CD8-positive, alpha-beta T cell (primary cell): ENCODE measurements at regions of chr9 and their contacts with region 1.

Region 1: GRCh38 chr9:136728080-136728547 is 14.6 kb downstream of the LCN10 start:
- DNase-seq: peak; percentile 86 to 97 (median 92)
- ATAC-seq: peak; percentile 80
- H3K4me3 ChIP-seq: peak overlapping the region; percentile 66 to 96
- H3K4me3 Mint-ChIP-seq: peak overlapping the region; percentile 92
- H3K27ac ChIP-seq: peak overlapping the region in 1 of 2 experiments; percentile 84
- H3K27ac Mint-ChIP-seq: peak overlapping the region; percentile 45
- H3K4me1 ChIP-seq: peaks cover 30% of the 10 kb centered on the region
- H3K4me1 Mint-ChIP-seq: peaks cover 25% of the 10 kb centered on the region
- H3K27me3 ChIP-seq: no peaks in the 10 kb centered on the region
- H3K27me3 Mint-ChIP-seq: no peaks in the 10 kb centered on the region
- CTCF ChIP-seq: peak; percentile 93

Region 2: GRCh38 chr9:136439550-136440408 is 288.3 kb before region 1 on chr9 and contains the start of gene INPP5E:
- CTCF ChIA-PET with region 1: no interaction called
- POLR2A ChIA-PET with region 1: no interaction called
- intact Hi-C with region 1: loop called in 1 of 2 experiments (anchors 5 kb)
- DNase-seq: peak; percentile 72 to 94 (median 82)
- ATAC-seq: peak; percentile 82
- H3K4me3 ChIP-seq: peak within 1 kb of the TSS; percentile 56 to 68
- H3K4me3 Mint-ChIP-seq: peak within 1 kb of the TSS; percentile 83
- H3K27ac ChIP-seq: peak within 1 kb of the TSS; percentile 25 to 42
- H3K27ac Mint-ChIP-seq: peak within 1 kb of the TSS; percentile 37
- H3K4me1 ChIP-seq: peaks cover 27% of the 10 kb centered on the region
- H3K4me1 Mint-ChIP-seq: peaks cover 26% of the 10 kb centered on the region
- H3K27me3 ChIP-seq: no peaks in the 10 kb centered on the region
- H3K27me3 Mint-ChIP-seq: no peaks in the 10 kb centered on the region
- CTCF ChIP-seq: peak; percentile 60
- total RNA-seq, gene INPP5E: 11.4 to 12.7 TPM

Region 3: DNA sequence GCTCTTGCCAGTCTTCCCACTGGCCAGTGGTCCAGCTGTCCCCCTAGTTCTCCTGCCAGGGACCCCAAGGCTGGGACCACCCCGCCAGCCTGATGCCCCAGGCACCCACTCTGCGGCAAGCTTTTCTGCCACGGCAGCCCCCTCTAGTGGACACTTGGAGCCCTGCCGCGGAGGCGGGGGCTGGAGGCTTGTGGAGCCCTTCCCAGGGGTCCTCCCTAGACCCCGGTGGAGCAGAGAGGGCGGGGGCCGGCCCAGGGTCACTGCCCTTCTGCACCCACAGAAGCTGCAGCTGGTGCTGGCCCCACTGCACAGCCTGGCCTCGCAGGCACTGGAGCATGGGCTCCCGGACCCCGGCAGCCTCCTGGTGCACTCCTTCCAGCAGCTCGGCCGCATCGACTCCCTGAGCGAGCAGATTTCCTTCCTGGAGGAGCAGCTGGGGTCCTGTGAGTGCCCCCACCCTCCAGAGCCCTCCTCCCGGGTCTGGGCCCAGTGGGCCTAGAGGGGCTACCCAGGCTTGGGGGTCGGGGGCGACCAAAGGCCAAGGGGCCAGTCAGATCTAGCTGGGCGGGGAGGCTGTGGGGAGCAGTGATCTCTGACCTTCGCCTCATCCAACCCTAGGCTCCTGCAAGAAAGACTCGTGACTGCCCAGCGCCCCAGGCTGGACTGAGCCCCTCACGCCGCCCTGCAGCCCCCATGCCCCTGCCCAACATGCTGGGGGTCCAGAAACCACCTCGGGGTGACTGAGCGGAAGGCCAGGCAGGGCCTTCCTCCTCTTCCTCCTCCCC is 56.3 kb before region 1 on chr9:
- CTCF ChIA-PET with region 1: interaction called, 11 read pairs
- POLR2A ChIA-PET with region 1: interaction called, 9 read pairs
- intact Hi-C with region 1: loop called in 1 of 2 experiments (anchors 5 kb)
- DNase-seq: peak in 7 of 9 experiments; percentile 20 to 58 (median 46)
- ATAC-seq: peak; percentile 72
- H3K4me3 ChIP-seq: no peak overlapping the region
- H3K4me3 Mint-ChIP-seq: no peak overlapping the region
- H3K27ac ChIP-seq: no peak overlapping the region
- H3K27ac Mint-ChIP-seq: no peak overlapping the region
- H3K4me1 ChIP-seq: no peaks in the 10 kb centered on the region
- H3K4me1 Mint-ChIP-seq: no peaks in the 10 kb centered on the region
- H3K27me3 ChIP-seq: no peaks in the 10 kb centered on the region
- H3K27me3 Mint-ChIP-seq: no peaks in the 10 kb centered on the region
- CTCF ChIP-seq: peak; percentile 71

Region 4: GRCh38 chr9:136700959-136701667 is 27.0 kb before region 1 on chr9:
- CTCF ChIA-PET with region 1: interaction called, 4 read pairs
- POLR2A ChIA-PET with region 1: interaction called, 4 read pairs
- intact Hi-C with region 1: loop called in 1 of 2 experiments (anchors 1 kb)
- DNase-seq: peak; percentile 32 to 87 (median 56)
- ATAC-seq: peak; percentile 87
- H3K4me3 ChIP-seq: peak overlapping the region; percentile 37 to 51
- H3K4me3 Mint-ChIP-seq: peak overlapping the region; percentile 79
- H3K27ac ChIP-seq: peak overlapping the region in 1 of 2 experiments; percentile 63
- H3K27ac Mint-ChIP-seq: peak overlapping the region; percentile 97
- H3K4me1 ChIP-seq: peaks cover 16% of the 10 kb centered on the region
- H3K4me1 Mint-ChIP-seq: peaks cover 20% of the 10 kb centered on the region
- H3K27me3 ChIP-seq: peaks cover 0 to 5% of the 10 kb centered on the region in 2 experiments
- H3K27me3 Mint-ChIP-seq: peaks cover 3% of the 10 kb centered on the region
- CTCF ChIP-seq: no peak

Region 5: DNA sequence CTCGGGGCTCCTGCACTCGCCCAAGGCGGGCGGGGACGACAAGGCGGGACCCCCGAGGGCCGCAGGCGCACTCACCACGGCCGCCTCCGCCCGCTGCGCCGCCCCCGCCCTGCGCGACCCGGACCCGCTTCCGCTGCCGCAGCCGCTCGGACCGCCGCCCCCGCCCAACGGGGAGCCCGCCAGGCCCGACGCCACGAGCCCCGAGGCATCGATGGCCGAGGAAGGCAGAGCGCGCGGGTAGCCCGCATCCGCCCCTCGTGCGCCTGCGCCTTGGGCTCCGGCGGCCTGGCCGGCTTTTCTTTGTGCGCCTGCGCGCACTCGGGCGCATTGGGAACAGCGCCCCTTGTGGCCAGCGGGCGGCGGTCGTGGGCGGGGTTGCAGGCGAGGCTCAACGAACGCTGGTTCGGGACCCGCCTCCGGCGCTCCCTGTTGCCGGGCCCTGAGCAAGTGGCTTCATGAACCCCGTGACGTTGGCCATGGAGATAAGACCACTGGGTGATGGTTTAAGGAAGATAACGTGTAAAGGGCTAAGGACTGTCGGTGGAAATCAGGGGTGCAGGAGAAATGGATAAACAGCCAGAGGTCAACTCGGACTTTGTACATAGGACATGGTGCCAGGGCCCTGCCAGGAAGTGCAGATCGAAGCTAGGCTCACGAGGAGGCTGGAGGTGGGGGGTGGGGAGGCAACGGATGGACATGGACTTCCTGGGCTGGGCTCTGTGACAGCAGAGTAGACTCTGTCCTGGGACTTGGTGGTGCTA is 216.6 kb after region 1 on chr9 and contains the starts of genes C8G and FBXW5:
- CTCF ChIA-PET with region 1: no interaction called
- POLR2A ChIA-PET with region 1: no interaction called
- intact Hi-C with region 1: loop called in 1 of 2 experiments (anchors 1 kb)
- DNase-seq: peak; percentile 87 to 98 (median 93)
- ATAC-seq: peak; percentile 87
- H3K4me3 ChIP-seq: peak within 1 kb of the TSS; percentile 63 to 79
- H3K4me3 Mint-ChIP-seq: peak within 1 kb of the TSS; percentile 82
- H3K27ac ChIP-seq: peak within 1 kb of the TSS; percentile 28 to 48
- H3K27ac Mint-ChIP-seq: peak within 1 kb of the TSS; percentile 62
- H3K4me1 ChIP-seq: peaks cover 16% of the 10 kb centered on the region
- H3K4me1 Mint-ChIP-seq: peaks cover 12% of the 10 kb centered on the region
- H3K27me3 ChIP-seq: no peaks in the 10 kb centered on the region
- H3K27me3 Mint-ChIP-seq: no peaks in the 10 kb centered on the region
- CTCF ChIP-seq: peak; percentile 96
- total RNA-seq, gene C8G: not detected
- total RNA-seq, gene FBXW5: 38.4 to 39.5 TPM